ENCODE measurements at regions of chr20 and their contacts with region 1.

Region 1: GRCh38 chr20:4256874-4257273 is 241.5 kb upstream of the RNF24 start:
- DNase-seq: no peak
- H3K4me3 ChIP-seq: no peak overlapping the region
- H3K27ac ChIP-seq: no peak overlapping the region
- H3K4me1 ChIP-seq: no peaks in the 10 kb centered on the region
- H3K27me3 ChIP-seq: peaks cover 0 to 20% (median 0%) of the 10 kb centered on the region in 4 donors
- CTCF ChIP-seq: no peak
- POLR2A ChIP-seq: no peak

Region 2: GRCh38 chr20:4585104-4585753 is 328.4 kb after region 1 on chr20:
- intact Hi-C with region 1: loop called (anchors 10 kb)
- DNase-seq: no peak
- H3K4me3 ChIP-seq: no peak overlapping the region
- H3K27ac ChIP-seq: no peak overlapping the region
- H3K4me1 ChIP-seq: no peaks in the 10 kb centered on the region
- H3K27me3 ChIP-seq: peaks cover 0 to 15% (median 0%) of the 10 kb centered on the region in 4 donors
- CTCF ChIP-seq: no peak
- POLR2A ChIP-seq: no peak

Measured in esophagus squamous epithelium (tissue), 5 donors.